ENCODE measurements at regions of chr18 and their contacts with region 1.

Region 1: DNA sequence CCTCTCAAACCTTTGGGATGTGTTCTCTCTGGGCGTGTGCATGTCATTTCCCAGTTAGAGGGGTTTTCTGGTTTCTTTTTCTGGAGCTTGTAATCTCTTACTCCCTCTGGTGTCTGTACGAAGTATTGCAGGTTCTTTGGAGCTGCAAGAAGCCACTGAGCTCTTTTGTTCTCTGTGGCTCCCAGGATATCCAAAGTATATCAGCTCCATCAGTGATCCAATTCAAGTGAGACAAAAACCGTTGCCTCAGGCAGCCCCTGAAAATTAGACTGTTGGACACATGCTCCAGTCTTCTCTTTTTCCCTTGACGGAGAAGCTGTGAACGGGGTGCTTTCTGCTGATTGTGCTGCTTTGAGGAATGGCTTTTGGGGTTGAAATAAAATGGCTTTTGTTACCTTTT is 59.0 kb upstream of the LDLRAD4 start:
- DNase-seq: peak in 7 of 35 experiments; percentile 16 to 79 (median 27)
- ATAC-seq: peak; percentile 40 to 61 (median 48)
- H3K4me3 ChIP-seq: no peak overlapping the region
- H3K4me3 Mint-ChIP-seq: no peak overlapping the region
- H3K27ac ChIP-seq: no peak overlapping the region
- H3K27ac Mint-ChIP-seq: no peak overlapping the region
- H3K4me1 ChIP-seq: no peaks in the 10 kb centered on the region
- H3K4me1 Mint-ChIP-seq: peaks cover 2 to 6% (median 3%) of the 10 kb centered on the region in 3 donors
- H3K27me3 ChIP-seq: peaks cover 0 to 14% of the 10 kb centered on the region in 2 experiments
- H3K27me3 Mint-ChIP-seq: peaks cover 0 to 6% of the 10 kb centered on the region in 2 donors

Region 2: DNA sequence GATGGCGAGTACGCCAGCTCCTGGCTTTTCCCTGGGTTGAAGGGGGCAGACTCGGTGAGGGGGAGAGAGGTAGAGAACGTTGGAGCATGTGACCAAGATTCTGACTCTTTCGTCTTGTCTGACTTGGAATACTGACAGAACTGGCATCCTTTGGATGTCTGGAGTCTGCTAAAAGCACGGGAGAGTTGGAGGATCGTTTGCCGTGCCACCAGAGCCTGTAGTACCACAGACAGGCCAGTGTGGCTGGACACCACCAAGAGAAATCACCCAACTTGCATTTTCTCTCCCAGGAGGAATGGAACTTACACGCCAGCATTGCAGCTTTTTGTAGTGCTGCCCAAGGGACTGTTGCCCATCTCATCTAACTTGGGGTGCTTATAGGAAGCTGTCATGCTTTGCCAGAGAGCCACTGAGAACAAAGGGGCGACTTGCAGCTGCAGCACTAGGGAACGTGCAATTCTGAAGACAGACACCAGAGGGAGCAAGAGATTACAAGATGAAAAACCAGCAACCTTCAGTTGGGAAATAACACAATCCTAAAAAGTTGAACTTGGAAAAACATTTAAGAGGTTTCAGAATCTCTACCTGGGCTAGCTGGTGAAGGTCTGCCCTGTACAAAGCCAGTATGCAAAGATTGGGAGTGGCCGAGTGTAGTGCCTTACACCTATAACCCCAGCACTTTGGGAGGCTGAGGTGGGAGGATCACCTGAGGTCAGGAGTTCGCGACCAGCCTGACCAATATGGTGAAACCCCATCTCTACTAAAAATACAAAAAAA is 432.6 kb before region 1 on chr18:
- CTCF ChIA-PET with region 1: interaction called in 1 of 2 experiments, 10 read pairs
- POLR2A ChIA-PET with region 1: no interaction called
- DNase-seq: peak in 33 of 35 experiments; percentile 9 to 82 (median 37)
- ATAC-seq: peak; percentile 53 to 67 (median 64)
- H3K4me3 ChIP-seq: no peak overlapping the region
- H3K4me3 Mint-ChIP-seq: no peak overlapping the region
- H3K27ac ChIP-seq: no peak overlapping the region
- H3K27ac Mint-ChIP-seq: no peak overlapping the region
- H3K4me1 ChIP-seq: no peaks in the 10 kb centered on the region
- H3K4me1 Mint-ChIP-seq: peaks cover 0 to 1% (median 0%) of the 10 kb centered on the region in 3 donors
- H3K27me3 ChIP-seq: no peaks in the 10 kb centered on the region
- H3K27me3 Mint-ChIP-seq: no peaks in the 10 kb centered on the region

Region 3: GRCh38 chr18:13006531-13007247 is 152.9 kb before region 1 on chr18:
- CTCF ChIA-PET with region 1: no interaction called
- POLR2A ChIA-PET with region 1: interaction called in 1 of 2 experiments, 14 read pairs
- DNase-seq: no peak
- ATAC-seq: no peak
- H3K4me3 ChIP-seq: no peak overlapping the region
- H3K4me3 Mint-ChIP-seq: no peak overlapping the region
- H3K27ac ChIP-seq: no peak overlapping the region
- H3K27ac Mint-ChIP-seq: no peak overlapping the region
- H3K4me1 ChIP-seq: no peaks in the 10 kb centered on the region
- H3K4me1 Mint-ChIP-seq: peaks cover 7 to 22% (median 14%) of the 10 kb centered on the region in 3 donors
- H3K27me3 ChIP-seq: no peaks in the 10 kb centered on the region
- H3K27me3 Mint-ChIP-seq: no peaks in the 10 kb centered on the region